ENCODE measurements at regions of chr4 and their contacts with region 1.

Region 1: DNA sequence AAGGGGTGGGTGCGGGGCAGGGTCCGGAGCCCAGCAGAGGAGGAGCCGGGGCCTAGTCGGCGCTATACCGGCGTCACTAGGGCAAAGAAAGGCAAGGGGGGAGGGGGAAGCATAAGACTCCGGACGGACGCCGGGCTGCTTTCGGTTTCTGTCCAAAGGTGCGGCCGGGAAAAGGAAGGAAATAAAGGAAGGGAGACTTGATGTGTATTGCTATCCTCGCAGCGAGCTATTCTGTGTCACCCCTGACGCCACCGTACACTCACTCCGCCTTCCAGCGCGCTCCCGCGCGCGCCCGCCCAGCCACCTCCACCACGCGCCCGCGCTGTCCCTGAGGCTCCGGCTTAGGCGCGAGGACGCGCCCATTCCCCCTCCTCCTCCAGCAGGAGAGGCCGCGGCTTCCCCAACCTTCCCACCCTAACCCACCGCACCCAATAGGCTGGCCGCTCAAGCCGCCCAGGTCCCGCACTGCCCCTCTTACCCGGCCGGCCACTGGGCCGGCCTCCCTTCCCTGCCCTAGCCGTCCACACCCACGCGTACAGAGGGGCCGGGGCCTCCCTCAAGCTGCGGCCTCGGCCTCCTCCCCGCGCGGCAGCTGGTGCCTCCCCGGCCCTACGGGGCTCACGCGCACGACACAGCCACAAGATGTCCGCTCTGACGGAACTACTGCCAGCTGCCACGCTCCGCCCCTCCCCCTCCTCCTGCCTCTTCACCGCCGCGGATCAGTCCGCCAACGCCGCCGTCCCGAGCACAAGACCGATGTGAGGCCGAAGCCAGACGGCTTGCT is at the start of gene UBE2D3:
- DNase-seq: peak; percentile 93
- H3K4me3 Mint-ChIP-seq: no peak within 1 kb of the TSS
- H3K27ac Mint-ChIP-seq: no peak within 1 kb of the TSS
- H3K4me1 Mint-ChIP-seq: peaks cover 6% of the 10 kb centered on the region
- H3K27me3 Mint-ChIP-seq: no peaks in the 10 kb centered on the region
- CTCF ChIP-seq: no peak
- total RNA-seq, gene UBE2D3: 235 and 243 TPM in 2 replicates

Region 2: DNA sequence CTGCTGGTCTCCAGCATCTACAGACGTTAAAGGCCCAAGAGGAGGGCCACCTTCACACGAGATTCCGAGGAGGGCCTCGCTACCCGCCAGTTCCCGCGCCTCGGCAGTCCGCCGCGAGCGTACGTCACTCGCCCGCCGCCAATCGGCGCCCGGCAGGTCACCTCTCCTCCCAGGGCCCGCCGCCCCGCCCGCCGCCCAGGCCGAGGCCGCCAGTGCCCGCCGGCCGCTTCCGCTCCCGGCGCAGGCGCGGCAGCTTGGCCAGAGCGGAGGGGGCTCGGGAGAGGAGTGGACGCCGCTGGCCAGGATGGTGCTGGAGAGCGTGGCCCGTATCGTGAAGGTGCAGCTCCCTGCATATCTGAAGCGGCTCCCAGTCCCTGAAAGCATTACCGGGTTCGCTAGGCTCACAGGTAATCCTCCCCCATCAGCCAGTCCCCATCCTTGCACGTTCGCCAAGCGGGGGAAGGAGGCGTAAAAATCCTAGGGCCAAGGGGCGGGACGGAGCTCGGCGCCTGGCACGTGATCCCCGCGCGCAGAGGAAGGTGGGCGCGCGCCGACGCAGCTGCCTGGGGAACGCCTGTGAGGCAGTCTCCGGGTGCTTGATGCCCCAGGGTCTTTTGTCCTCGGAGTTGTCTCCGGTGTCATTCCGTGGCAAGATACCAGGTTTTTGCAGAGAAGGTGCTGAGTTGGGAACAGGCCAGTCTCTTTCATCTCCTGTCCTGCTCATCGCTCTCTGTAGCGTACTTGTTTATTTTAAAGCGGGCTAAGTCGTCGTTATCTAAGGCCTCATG is 41.9 kb after region 1 on chr4 and contains the start of gene CISD2:
- CTCF ChIA-PET with region 1: interaction called, 3 read pairs
- intact Hi-C with region 1: loop called (anchors 1 kb)
- DNase-seq: peak; percentile 89
- H3K4me3 Mint-ChIP-seq: peak within 1 kb of the TSS; percentile 94
- H3K27ac Mint-ChIP-seq: peak within 1 kb of the TSS; percentile 89
- H3K4me1 Mint-ChIP-seq: no peaks in the 10 kb centered on the region
- H3K27me3 Mint-ChIP-seq: no peaks in the 10 kb centered on the region
- CTCF ChIP-seq: no peak
- total RNA-seq, gene CISD2: 34.9 and 36.9 TPM in 2 replicates

Region 3: DNA sequence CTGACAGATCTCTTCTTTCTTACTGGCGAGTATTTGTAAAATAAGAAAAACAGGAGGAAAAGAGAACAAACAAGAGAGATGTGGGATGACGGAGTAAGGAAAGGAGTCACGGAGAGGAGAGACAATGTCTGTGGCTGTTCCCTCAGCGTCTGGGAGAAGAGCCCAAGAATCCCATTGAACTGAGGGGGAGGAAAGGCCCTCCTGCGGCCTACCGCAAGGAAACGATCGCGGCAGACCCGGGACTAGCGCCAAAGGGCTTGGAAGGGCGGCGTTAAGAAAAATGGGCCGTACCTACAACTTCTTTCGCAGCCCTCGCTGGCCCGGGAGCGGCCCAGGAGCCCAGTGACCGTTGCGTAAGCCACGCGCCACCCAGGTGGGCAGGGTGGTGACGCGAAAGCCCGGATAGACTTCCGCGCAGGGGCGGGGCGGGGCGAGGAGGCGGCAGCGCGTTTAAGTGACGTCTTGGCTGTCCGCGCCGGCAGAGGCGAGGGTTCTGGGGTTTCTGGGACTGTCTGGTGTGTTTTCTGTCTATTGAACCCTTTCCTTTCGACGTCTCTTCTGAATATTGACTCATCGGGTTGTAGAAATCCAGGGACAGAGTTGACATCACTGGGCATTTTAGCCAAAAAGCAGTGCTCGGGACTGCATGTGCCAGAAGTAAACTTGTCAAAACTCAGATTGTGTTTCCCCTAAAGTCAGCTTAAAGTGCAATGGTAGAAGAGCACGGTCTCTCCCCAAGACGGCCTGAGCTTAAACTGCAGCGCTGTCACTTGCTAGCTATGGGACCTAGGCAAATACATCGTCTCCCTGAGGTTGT is 192.4 kb after region 1 on chr4 and contains the start of gene SLC9B1:
- CTCF ChIA-PET with region 1: interaction called, 4 read pairs
- intact Hi-C with region 1: loop called (anchors 5 kb)
- DNase-seq: peak; percentile 95
- H3K4me3 Mint-ChIP-seq: peak within 1 kb of the TSS; percentile 79
- H3K27ac Mint-ChIP-seq: peak within 1 kb of the TSS; percentile 91
- H3K4me1 Mint-ChIP-seq: no peaks in the 10 kb centered on the region
- H3K27me3 Mint-ChIP-seq: no peaks in the 10 kb centered on the region
- CTCF ChIP-seq: no peak
- total RNA-seq, gene SLC9B1: not detected in 2 replicates

Region 4: DNA sequence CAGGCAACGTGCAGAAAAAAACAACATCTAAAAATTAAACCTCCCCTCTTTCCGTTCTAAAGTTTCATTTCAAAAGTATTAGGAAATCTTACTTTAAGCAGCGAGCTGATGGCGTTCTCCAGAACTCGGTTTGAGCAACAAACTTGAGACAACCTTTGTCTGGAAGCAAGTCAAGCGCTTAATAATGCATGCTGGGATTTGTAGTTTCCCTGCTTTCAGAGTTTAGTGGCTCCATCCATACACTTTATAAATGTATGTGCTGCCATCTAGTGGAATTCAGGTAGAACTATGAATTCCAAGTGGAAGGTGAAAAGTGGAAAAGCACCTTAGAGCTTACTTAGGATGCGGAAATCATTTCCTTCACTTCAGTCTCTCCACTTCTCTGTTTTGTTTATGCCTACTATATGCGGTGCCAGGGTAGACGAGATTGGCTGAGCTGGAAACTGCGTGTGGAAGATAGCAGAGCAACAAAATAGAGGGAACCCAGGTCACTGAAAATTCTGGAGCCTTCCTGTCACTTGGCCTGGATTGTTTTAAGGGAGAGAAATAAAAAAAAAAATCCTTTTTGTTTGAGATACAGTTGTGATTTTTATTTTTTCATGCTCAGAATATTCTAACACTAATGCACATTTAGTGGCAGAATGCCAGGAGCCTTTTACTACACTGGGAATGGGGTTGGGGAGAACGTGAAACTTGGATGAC is 272.8 kb after region 1 on chr4 and contains the start of gene BDH2:
- CTCF ChIA-PET with region 1: interaction called, 3 read pairs
- intact Hi-C with region 1: loop called (anchors 10 kb)
- DNase-seq: peak; percentile 11
- H3K4me3 Mint-ChIP-seq: peak within 1 kb of the TSS; percentile 39
- H3K27ac Mint-ChIP-seq: no peak within 1 kb of the TSS
- H3K4me1 Mint-ChIP-seq: peaks cover 14% of the 10 kb centered on the region
- H3K27me3 Mint-ChIP-seq: no peaks in the 10 kb centered on the region
- CTCF ChIP-seq: peak; percentile 21
- total RNA-seq, gene BDH2: 8.1 and 15.2 TPM in 2 replicates

Measured in Calu3 (cell line).